ENCODE measurements at regions of chr20 and their contacts with region 1.

Region 1: DNA sequence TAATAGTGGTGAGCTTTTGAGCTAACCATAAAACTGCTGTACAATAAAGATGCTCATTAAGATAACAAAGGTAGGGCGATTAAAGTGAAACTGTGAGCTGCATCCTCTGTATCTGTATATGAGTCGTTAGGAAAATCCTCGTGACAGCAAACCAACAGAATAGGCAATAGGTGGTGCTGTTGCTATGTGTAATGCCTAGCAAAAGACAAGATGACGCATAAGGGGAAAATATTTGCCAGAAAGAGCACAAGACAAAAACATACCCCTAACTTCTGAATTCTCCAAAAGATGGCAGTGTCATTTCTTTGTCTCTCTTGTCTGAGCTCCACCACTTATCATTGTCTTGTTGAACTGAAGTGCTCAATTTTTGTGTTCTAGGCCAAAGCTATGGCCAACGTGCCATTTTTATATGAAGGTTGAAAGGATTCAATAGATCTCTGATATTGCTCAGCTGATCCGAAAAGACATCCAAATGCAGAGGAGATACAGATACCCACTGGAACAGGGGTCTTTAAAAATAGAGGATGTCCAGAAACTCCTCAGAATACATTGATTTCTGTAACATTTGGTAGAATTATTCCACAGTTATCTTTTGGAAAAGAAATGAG is 56.3 kb upstream of the ANKEF1 start:
- DNase-seq: peak; percentile 89
- ATAC-seq: peak; percentile 97
- H3K4me3 ChIP-seq: no peak overlapping the region
- H3K27ac ChIP-seq: no peak overlapping the region
- H3K4me1 ChIP-seq: no peaks in the 10 kb centered on the region
- H3K27me3 ChIP-seq: peaks cover 3% of the 10 kb centered on the region; the same call in 1 of the 2 replicates
- CTCF ChIP-seq: peak; percentile 98
- POLR2A ChIP-seq: no peak
- RAD21 ChIP-seq: peak; percentile 98

Region 2: GRCh38 chr20:9474835-9475415 is 503.6 kb before region 1 on chr20:
- CTCF ChIA-PET with region 1: no interaction called
- POLR2A ChIA-PET with region 1: no interaction called
- dilution Hi-C with region 1: no loop called
- in situ Hi-C with region 1: no loop called
- intact Hi-C with region 1: no loop called
- DNase-seq: peak; percentile 53
- ATAC-seq: peak; percentile 75
- H3K4me3 ChIP-seq: no peak overlapping the region
- H3K27ac ChIP-seq: no peak overlapping the region
- H3K4me1 ChIP-seq: no peaks in the 10 kb centered on the region
- H3K27me3 ChIP-seq: no peaks in the 10 kb centered on the region
- CTCF ChIP-seq: no peak
- POLR2A ChIP-seq: no peak
- RAD21 ChIP-seq: no peak

Region 3: DNA sequence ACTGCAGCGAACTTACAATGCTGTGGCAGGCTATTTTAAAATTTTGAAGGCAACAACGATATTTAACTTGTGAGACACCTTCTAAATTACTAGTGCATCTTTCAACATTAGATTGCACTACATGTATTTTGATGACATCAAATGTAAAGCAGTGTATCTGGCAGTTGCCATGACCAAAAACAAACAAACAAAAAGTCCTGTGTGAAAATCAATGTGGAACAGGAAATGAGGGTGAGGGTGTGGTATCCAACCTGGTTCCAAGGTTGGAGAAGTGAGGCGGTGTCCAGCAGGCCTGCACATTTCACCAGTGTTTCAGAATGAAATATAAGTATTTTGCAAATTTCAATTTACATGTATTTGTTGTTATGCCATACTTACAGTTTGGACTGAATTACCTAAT is 352.1 kb before region 1 on chr20:
- CTCF ChIA-PET with region 1: no interaction called
- POLR2A ChIA-PET with region 1: no interaction called
- dilution Hi-C with region 1: no loop called
- in situ Hi-C with region 1: no loop called
- intact Hi-C with region 1: no loop called
- DNase-seq: no peak
- ATAC-seq: no peak
- H3K4me3 ChIP-seq: no peak overlapping the region
- H3K27ac ChIP-seq: no peak overlapping the region
- H3K4me1 ChIP-seq: no peaks in the 10 kb centered on the region
- H3K27me3 ChIP-seq: peaks cover 3% of the 10 kb centered on the region
- CTCF ChIP-seq: no peak
- POLR2A ChIP-seq: no peak
- RAD21 ChIP-seq: no peak

Region 4: DNA sequence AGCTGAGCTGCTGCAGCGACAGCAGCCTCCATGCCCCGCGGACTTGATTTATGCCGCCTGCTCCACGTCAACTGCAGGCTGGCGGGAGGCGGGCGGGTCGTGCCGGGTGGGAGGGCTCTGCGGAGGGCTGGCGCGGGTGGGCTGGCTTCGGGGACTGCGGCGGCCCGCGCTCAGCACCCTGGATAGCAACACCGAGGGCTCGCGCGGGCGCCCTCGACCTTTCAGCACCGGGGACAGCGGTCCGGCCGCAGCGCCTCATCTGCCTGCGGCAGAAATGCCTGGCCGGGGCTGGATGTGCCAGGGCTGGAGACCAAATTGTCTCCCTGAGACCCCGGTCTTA is 240.9 kb after region 1 on chr20:
- CTCF ChIA-PET with region 1: no interaction called
- POLR2A ChIA-PET with region 1: no interaction called
- dilution Hi-C with region 1: no loop called
- in situ Hi-C with region 1: no loop called
- intact Hi-C with region 1: loop called (anchors 1 kb)
- DNase-seq: peak; percentile 53
- ATAC-seq: peak; percentile 64
- H3K4me3 ChIP-seq: peak overlapping the region; percentile 77
- H3K27ac ChIP-seq: no peak overlapping the region
- H3K4me1 ChIP-seq: peaks cover 2% of the 10 kb centered on the region; the same call in 1 of the 2 replicates
- H3K27me3 ChIP-seq: no peaks in the 10 kb centered on the region
- CTCF ChIP-seq: no peak
- POLR2A ChIP-seq: no peak
- RAD21 ChIP-seq: peak; percentile 24; the same call in 1 of the 2 replicates

Region 5: GRCh38 chr20:10427060-10427692 is 448.7 kb after region 1 on chr20:
- CTCF ChIA-PET with region 1: interaction called, 21 read pairs
- POLR2A ChIA-PET with region 1: no interaction called
- dilution Hi-C with region 1: no loop called
- in situ Hi-C with region 1: loop called (anchors 5 kb)
- intact Hi-C with region 1: loop called (anchors 1 kb)
- DNase-seq: peak; percentile 74
- ATAC-seq: peak; percentile 81
- H3K4me3 ChIP-seq: no peak overlapping the region
- H3K27ac ChIP-seq: no peak overlapping the region
- H3K4me1 ChIP-seq: peaks cover 2% of the 10 kb centered on the region; the same call in 1 of the 2 replicates
- H3K27me3 ChIP-seq: no peaks in the 10 kb centered on the region
- CTCF ChIP-seq: peak; percentile 83
- POLR2A ChIP-seq: no peak
- RAD21 ChIP-seq: peak; percentile 83

Region 6: GRCh38 chr20:10469599-10469998 is 491.1 kb after region 1 on chr20:
- CTCF ChIA-PET with region 1: no interaction called
- POLR2A ChIA-PET with region 1: no interaction called
- dilution Hi-C with region 1: no loop called
- in situ Hi-C with region 1: no loop called
- intact Hi-C with region 1: loop called (anchors 1 kb)
- DNase-seq: peak; percentile 87
- ATAC-seq: peak; percentile 80
- H3K4me3 ChIP-seq: no peak overlapping the region
- H3K27ac ChIP-seq: no peak overlapping the region
- H3K4me1 ChIP-seq: peaks cover 4% of the 10 kb centered on the region
- H3K27me3 ChIP-seq: no peaks in the 10 kb centered on the region
- CTCF ChIP-seq: peak; percentile 68
- POLR2A ChIP-seq: no peak
- RAD21 ChIP-seq: peak; percentile 77

Region 7: GRCh38 chr20:10654630-10655029 is 676.1 kb after region 1 on chr20:
- CTCF ChIA-PET with region 1: no interaction called
- POLR2A ChIA-PET with region 1: no interaction called
- dilution Hi-C with region 1: no loop called
- in situ Hi-C with region 1: no loop called
- intact Hi-C with region 1: loop called (anchors 10 kb)
- DNase-seq: no peak
- ATAC-seq: no peak
- H3K4me3 ChIP-seq: no peak overlapping the region
- H3K27ac ChIP-seq: no peak overlapping the region
- H3K4me1 ChIP-seq: peaks cover 28% of the 10 kb centered on the region
- H3K27me3 ChIP-seq: no peaks in the 10 kb centered on the region
- CTCF ChIP-seq: no peak
- POLR2A ChIP-seq: no peak
- RAD21 ChIP-seq: no peak